ENCODE measurements at regions of chrX and their contacts with region 1.

Region 1: DNA sequence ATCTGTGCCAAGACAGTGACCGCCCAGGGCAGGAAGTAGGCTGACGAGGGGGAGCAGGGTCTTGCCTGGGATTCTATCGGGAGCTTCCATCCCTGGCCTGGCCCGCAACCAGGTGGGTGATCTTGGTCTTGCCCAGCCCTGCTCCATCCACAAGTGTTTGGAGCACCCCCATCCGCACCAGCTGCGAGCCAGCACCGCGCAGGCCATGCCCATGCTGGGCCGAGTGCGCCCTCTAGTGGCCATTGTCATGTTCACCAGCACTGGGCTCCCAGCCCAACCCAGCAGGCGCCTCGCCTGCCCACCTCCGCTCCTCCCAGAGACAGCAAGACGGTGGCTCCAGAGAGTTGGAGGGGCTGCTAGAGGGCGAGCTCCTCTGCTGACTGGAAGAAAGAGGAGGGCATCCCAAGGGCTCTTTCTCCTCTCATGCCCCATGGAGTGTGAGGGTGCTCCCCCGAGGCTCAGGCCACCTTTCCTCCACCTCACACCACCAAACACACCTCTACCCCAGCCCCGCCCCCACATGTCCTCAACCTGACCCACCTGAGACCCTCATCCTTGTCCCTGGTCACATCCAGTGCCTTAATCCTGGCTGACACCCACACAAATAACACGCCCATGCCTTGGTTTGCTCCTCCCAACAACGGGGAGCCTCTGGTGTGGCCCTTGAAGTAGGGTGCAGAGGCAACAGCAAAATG is 9.8 kb upstream of the ATP2B3 start:
- DNase-seq: no peak
- ATAC-seq: peak; percentile 99
- H3K4me3 ChIP-seq: no peak overlapping the region
- H3K27ac ChIP-seq: no peak overlapping the region
- H3K4me1 ChIP-seq: no peaks in the 10 kb centered on the region
- H3K27me3 ChIP-seq: no peaks in the 10 kb centered on the region
- CTCF ChIP-seq: peak; percentile 75 to 88 (median 83)
- EP300 ChIP-seq: no peak
- POLR2A ChIP-seq: no peak
- RAD21 ChIP-seq: peak; percentile 74

Region 2: DNA sequence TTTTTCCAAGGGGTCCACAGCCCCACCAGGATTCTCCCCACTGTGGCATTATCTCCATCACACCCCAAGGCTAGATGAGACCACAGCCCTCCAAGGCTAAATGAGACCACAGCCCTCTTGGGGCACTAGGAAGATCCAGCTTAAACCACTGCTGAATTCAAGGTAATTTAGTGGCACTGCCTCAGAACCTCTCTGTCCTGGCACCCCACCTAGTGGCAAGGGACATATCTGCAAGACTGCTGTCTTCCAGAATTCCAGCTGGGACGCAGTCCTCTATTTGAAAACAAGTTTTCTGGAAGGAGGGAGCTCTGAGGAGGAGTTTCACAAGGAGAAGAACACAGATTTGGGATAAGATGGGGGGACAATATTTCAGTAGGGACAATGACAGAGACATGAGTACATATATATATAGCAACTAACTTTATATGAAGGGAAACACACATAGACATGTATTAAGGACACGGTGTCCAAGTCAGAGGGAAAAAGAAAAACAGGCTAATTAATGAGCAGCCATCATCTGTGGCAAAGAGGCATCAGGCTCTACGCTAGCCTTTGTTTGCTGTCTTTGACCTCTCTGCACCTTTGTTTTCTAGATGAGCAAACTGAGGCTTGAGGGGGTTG is 686.4 kb before region 1 on chrX:
- CTCF ChIA-PET with region 1: no interaction called
- POLR2A ChIA-PET with region 1: no interaction called
- RAD21 ChIA-PET with region 1: no interaction called
- SMC1A ChIA-PET with region 1: no interaction called
- in situ Hi-C with region 1: no loop called
- intact Hi-C with region 1: no loop called
- DNase-seq: no peak
- ATAC-seq: peak; percentile 67
- H3K4me3 ChIP-seq: no peak overlapping the region
- H3K27ac ChIP-seq: no peak overlapping the region
- H3K4me1 ChIP-seq: no peaks in the 10 kb centered on the region
- H3K27me3 ChIP-seq: no peaks in the 10 kb centered on the region
- CTCF ChIP-seq: peak; percentile 60 to 69 (median 66)
- EP300 ChIP-seq: no peak
- POLR2A ChIP-seq: no peak
- RAD21 ChIP-seq: peak; percentile 50

Region 3: DNA sequence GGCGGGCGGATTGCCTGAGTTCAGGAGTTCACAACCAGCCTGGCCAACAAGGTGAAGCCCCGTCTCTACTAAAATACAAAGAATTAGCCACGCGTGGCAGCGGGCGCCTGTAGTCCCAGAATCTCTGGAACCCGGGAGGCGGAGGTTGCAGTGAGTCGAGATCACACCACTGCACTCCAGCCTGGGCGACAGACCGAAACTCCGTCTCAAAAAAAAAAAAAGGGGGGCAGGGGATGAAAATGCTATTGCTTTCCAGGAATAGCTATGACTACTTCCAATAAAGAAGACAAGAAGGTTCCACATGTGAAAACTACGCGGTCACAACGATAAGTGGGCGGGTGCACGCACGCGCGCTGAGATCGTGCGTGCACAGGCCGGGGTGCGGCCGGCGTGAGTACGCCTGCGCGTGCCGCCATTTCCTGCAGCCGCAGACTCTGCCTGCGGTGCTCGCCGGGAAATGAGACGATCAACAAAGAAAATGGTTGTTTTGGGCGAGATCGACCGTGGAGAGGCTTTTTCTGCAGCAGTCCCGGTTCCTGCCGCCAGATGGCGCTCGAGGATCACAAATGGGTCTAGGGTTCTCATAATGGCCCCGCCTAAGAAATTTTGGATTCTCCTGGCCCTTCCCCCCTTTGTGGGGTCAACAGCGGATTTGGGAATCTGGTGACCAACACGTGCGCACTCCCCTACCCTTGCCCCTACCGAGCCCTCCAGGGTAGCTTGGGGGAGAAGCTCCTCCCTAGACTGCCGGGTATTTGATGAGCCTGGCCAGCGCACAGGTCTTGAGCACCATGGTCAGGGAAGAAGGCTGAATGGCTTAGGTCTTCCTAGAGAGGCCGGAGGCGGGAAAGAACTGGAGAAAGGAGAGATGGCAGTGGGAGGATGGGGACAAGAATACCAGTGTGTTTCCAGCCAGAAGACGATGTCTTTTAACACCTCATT is 548.8 kb before region 1 on chrX:
- CTCF ChIA-PET with region 1: interaction called, 4 read pairs
- POLR2A ChIA-PET with region 1: no interaction called
- RAD21 ChIA-PET with region 1: no interaction called
- SMC1A ChIA-PET with region 1: interaction called, 6 read pairs
- in situ Hi-C with region 1: no loop called
- intact Hi-C with region 1: loop called (anchors 1 kb)
- DNase-seq: peak; percentile 55
- ATAC-seq: peak; percentile 100
- H3K4me3 ChIP-seq: peak overlapping the region; percentile 53; the same call in 1 of the 2 replicates
- H3K27ac ChIP-seq: no peak overlapping the region
- H3K4me1 ChIP-seq: no peaks in the 10 kb centered on the region
- H3K27me3 ChIP-seq: no peaks in the 10 kb centered on the region
- CTCF ChIP-seq: peak; percentile 87 to 97 (median 89)
- EP300 ChIP-seq: no peak
- POLR2A ChIP-seq: 0 out of 2 replicates have a peak, but pooled peaks have one; percentile 38
- RAD21 ChIP-seq: peak; percentile 90

Region 4: DNA sequence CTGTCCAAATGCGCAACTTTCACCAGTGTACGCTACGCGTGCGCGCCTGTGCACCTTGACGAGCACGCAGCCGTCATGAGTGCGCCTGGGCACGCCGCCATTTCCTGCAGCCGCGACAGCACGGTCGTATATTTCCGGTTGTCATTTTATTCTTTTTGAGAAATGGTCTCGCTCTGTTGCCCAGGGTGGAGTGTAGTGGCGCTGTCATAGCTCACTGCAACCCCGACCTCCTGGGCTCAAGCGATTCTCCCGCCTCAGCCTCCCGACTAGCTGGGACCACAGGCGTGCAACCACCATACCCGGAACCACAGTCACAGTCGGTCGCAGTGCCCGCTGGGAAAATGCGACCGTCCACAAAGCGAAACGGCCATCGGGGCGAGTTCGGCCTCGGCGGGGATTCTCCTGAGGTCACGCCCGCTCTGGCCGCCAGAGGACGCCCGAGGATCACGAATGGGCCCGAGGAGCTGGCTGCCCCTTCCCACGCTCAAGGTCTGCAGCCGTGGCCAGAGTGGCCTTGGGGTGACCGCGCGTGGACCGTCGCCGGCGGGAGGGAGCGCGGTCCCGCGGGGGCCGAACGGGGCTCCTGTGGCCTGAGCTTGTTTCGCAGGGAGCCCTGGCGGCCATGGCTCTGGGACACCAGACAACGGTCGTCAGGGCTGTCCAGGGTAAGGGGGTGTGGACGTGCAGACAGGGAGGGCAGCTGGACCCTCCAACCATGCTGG is 475.1 kb before region 1 on chrX:
- CTCF ChIA-PET with region 1: interaction called, 7 read pairs
- POLR2A ChIA-PET with region 1: no interaction called
- RAD21 ChIA-PET with region 1: no interaction called
- SMC1A ChIA-PET with region 1: interaction called, 3 read pairs
- in situ Hi-C with region 1: no loop called
- intact Hi-C with region 1: loop called (anchors 5 kb)
- DNase-seq: no peak
- ATAC-seq: peak; percentile 60
- H3K4me3 ChIP-seq: no peak overlapping the region
- H3K27ac ChIP-seq: peak overlapping the region; percentile 25; the same call in 1 of the 2 replicates
- H3K4me1 ChIP-seq: no peaks in the 10 kb centered on the region
- H3K27me3 ChIP-seq: no peaks in the 10 kb centered on the region
- CTCF ChIP-seq: peak; percentile 59 to 66 (median 63); a peak in 5 of 6 replicates
- EP300 ChIP-seq: no peak
- POLR2A ChIP-seq: peak; percentile 64
- RAD21 ChIP-seq: peak; percentile 73

Region 5: GRCh38 chrX:153470435-153471363 is 36.9 kb before region 1 on chrX and contains the start of gene HAUS7:
- CTCF ChIA-PET with region 1: interaction called, 7 read pairs
- POLR2A ChIA-PET with region 1: no interaction called
- RAD21 ChIA-PET with region 1: no interaction called
- SMC1A ChIA-PET with region 1: no interaction called
- in situ Hi-C with region 1: no loop called
- intact Hi-C with region 1: loop called (anchors 2 kb)
- DNase-seq: peak; percentile 42
- ATAC-seq: peak; percentile 92
- H3K4me3 ChIP-seq: peak within 1 kb of the TSS; percentile 87
- H3K27ac ChIP-seq: peak within 1 kb of the TSS; percentile 31; the same call in 1 of the 2 replicates
- H3K4me1 ChIP-seq: no peaks in the 10 kb centered on the region
- H3K27me3 ChIP-seq: no peaks in the 10 kb centered on the region; a peak in 1 of 4 replicates
- CTCF ChIP-seq: peak; percentile 55 to 80 (median 59)
- EP300 ChIP-seq: no peak
- POLR2A ChIP-seq: peak; percentile 80
- RAD21 ChIP-seq: peak; percentile 20; the same call in 1 of the 2 replicates
- polyA plus RNA-seq, gene HAUS7: 6.7 to 15.6 TPM

Region 6: DNA sequence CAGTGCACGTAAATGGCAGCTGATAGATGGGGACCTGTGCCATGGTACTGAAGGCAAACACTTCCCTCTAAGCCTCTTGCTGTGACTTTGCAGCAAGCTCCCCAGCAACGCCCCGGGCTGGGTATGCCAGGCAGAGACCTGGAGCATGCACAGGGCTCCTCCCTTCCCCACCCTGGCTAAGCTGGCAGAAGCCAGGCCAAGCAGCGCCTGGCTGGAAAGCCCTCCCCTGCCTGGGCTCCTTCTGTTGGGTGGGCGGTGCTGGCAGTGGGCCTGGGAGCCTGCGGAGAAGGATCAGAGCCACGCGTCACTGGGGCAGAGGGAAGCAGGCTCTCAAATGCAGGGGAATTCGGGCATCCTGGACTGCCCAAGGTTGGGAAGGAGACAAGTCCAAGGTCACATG is 13.4 kb after region 1 on chrX:
- CTCF ChIA-PET with region 1: no interaction called
- POLR2A ChIA-PET with region 1: no interaction called
- RAD21 ChIA-PET with region 1: no interaction called
- SMC1A ChIA-PET with region 1: no interaction called
- in situ Hi-C with region 1: no loop called
- intact Hi-C with region 1: no loop called
- DNase-seq: no peak
- ATAC-seq: no peak
- H3K4me3 ChIP-seq: no peak overlapping the region
- H3K27ac ChIP-seq: no peak overlapping the region
- H3K4me1 ChIP-seq: no peaks in the 10 kb centered on the region
- H3K27me3 ChIP-seq: no peaks in the 10 kb centered on the region
- CTCF ChIP-seq: no peak
- EP300 ChIP-seq: no peak
- POLR2A ChIP-seq: no peak
- RAD21 ChIP-seq: no peak

Region 7: DNA sequence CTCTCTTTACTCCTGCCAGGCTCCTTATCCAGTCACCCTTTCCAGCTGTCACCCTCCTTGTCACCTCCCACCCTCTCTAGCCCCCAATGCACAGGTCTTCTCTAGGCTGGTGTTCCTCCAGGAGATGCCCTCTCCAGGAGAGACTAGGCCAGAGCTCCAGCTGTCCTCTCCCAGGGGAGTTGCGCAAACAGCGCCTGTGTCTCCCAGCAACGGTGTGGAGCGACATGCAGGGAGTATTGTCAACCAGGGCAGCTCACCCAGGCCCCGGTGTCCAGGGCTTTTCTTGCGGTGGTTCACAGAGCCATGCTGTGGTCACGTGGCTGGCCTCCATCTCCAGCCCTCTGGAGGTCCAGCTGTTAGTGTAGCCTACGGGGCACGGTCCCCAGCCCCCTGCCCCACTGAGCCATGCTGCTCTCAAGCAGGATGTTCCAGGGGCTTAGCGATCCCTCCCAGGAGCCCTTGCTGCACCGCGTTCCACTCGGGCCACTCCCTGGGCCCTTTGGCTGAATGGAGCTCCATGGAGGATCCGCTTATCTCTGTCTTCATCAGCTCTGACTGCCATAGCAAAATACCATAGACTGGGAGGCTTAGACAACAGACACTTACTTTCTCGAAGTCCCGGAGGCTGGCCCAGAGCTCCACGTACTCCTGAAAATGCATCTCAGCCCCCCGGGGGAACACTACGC is 56.6 kb after region 1 on chrX:
- CTCF ChIA-PET with region 1: no interaction called
- POLR2A ChIA-PET with region 1: no interaction called
- RAD21 ChIA-PET with region 1: no interaction called
- SMC1A ChIA-PET with region 1: no interaction called
- in situ Hi-C with region 1: no loop called
- intact Hi-C with region 1: no loop called
- DNase-seq: no peak
- ATAC-seq: no peak
- H3K4me3 ChIP-seq: no peak overlapping the region
- H3K27ac ChIP-seq: no peak overlapping the region
- H3K4me1 ChIP-seq: no peaks in the 10 kb centered on the region
- H3K27me3 ChIP-seq: no peaks in the 10 kb centered on the region; a peak in 2 of 4 replicates
- CTCF ChIP-seq: no peak
- EP300 ChIP-seq: no peak
- POLR2A ChIP-seq: no peak
- RAD21 ChIP-seq: no peak

Region 8: GRCh38 chrX:153657161-153657560 is 149.5 kb after region 1 on chrX:
- CTCF ChIA-PET with region 1: no interaction called
- POLR2A ChIA-PET with region 1: no interaction called
- RAD21 ChIA-PET with region 1: no interaction called
- SMC1A ChIA-PET with region 1: no interaction called
- in situ Hi-C with region 1: no loop called
- intact Hi-C with region 1: no loop called
- DNase-seq: no peak
- ATAC-seq: no peak
- H3K4me3 ChIP-seq: no peak overlapping the region
- H3K27ac ChIP-seq: no peak overlapping the region
- H3K4me1 ChIP-seq: no peaks in the 10 kb centered on the region
- H3K27me3 ChIP-seq: no peaks in the 10 kb centered on the region
- CTCF ChIP-seq: no peak
- EP300 ChIP-seq: no peak
- POLR2A ChIP-seq: no peak
- RAD21 ChIP-seq: no peak

Measured in GM12878 (cell line).